AG04450 (cell line): ENCODE measurements at regions of chr19 and their contacts with region 1.

Region 1: DNA sequence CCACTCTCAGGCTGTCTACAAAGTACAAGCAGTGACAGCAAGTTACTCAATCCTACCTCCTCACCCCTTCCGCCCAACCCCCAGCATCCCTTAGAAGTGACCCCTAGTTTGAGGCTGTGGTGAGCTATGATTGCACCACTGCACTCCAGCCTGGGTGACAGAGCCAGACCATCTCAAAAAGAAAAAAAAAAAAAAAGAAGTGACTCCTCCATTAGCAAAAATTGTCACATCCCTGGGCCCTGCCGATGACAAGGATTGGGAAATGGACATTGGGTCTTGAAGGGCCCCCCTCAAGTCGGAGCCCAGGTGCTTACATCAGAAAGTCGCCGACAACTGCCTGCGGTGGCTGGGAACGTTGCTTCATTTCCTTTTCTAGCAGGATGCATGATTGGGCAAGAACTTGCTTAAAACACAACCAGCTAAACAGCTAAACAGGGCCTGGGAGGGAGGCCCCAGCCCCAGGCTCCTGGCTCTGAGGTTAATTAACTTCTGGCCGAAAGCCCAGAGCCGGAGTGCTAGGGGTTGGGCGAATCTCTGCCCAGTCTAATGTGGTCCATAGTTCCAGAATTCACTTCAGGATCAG is 15.3 kb downstream of the RAB3D start:
- DNase-seq: peak; percentile 65
- H3K4me3 ChIP-seq: peak overlapping the region; percentile 38; the same call in 1 of the 2 replicates
- H3K27ac ChIP-seq: peak overlapping the region; percentile 89
- H3K27me3 ChIP-seq: no peaks in the 10 kb centered on the region
- CTCF ChIP-seq: no peak

Region 2: DNA sequence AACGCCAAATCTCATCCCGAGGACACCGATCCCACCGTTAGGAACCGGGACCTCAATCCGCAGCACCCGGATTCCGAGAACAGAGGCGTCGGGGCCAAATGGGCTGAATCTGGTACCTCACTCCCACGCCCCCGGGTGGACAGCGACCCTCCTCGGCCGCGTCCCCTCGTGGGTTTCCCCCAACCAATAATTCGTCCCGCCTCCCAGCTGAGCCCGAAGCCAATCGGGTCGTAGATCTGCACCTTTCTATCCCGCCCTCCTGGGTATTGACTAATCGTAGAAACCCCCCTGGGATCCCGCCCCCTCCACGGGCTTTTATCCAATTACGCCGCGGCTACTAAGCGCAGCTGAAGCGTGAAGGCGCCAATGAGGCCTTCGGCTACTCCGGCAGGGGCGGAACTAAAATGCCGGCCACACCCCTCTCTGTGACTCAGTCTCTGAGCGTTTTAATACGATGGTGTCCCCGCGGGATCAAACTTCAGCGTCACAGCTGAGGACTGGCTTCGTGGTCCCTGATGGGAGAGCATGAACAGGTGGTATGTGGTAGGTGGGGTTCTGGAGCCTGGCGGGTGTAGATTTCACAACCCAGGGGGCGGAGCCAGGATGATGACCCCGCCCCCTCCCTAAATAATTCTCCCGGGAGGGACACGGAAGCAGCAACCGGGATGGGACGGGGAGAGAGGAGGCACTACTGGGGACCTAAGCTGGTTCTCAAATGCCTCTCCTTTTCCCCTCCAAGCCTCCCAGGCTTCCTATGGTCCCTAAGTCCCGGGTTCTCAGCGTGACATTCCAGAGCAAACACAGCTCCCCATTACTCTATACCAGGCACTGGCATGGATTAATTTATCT is 22.1 kb after region 1 on chr19 and contains the starts of genes CCDC159 and TMEM205:
- CTCF ChIA-PET with region 1: no interaction called
- POLR2A ChIA-PET with region 1: interaction called, 11 read pairs
- DNase-seq: peak; percentile 97
- H3K4me3 ChIP-seq: peak within 1 kb of the TSS; percentile 90
- H3K27ac ChIP-seq: peak within 1 kb of the TSS; percentile 71
- H3K27me3 ChIP-seq: no peaks in the 10 kb centered on the region
- CTCF ChIP-seq: 0 out of 2 replicates have a peak, but pooled peaks have one; percentile 8
- polyA plus RNA-seq, gene CCDC159: 12.1 and 14.6 TPM in 2 replicates
- polyA plus RNA-seq, gene TMEM205: 71.9 and 90.6 TPM in 2 replicates

Region 3: GRCh38 chr19:11374433-11375142 is 50.4 kb after region 1 on chr19 and contains the start of gene SWSAP1:
- CTCF ChIA-PET with region 1: no interaction called
- POLR2A ChIA-PET with region 1: interaction called, 12 read pairs
- DNase-seq: peak; percentile 99
- H3K4me3 ChIP-seq: peak within 1 kb of the TSS; percentile 84
- H3K27ac ChIP-seq: peak within 1 kb of the TSS; percentile 91
- H3K27me3 ChIP-seq: no peaks in the 10 kb centered on the region
- CTCF ChIP-seq: no peak
- polyA plus RNA-seq, gene SWSAP1: 0.88 and 0.89 TPM in 2 replicates

Region 4: DNA sequence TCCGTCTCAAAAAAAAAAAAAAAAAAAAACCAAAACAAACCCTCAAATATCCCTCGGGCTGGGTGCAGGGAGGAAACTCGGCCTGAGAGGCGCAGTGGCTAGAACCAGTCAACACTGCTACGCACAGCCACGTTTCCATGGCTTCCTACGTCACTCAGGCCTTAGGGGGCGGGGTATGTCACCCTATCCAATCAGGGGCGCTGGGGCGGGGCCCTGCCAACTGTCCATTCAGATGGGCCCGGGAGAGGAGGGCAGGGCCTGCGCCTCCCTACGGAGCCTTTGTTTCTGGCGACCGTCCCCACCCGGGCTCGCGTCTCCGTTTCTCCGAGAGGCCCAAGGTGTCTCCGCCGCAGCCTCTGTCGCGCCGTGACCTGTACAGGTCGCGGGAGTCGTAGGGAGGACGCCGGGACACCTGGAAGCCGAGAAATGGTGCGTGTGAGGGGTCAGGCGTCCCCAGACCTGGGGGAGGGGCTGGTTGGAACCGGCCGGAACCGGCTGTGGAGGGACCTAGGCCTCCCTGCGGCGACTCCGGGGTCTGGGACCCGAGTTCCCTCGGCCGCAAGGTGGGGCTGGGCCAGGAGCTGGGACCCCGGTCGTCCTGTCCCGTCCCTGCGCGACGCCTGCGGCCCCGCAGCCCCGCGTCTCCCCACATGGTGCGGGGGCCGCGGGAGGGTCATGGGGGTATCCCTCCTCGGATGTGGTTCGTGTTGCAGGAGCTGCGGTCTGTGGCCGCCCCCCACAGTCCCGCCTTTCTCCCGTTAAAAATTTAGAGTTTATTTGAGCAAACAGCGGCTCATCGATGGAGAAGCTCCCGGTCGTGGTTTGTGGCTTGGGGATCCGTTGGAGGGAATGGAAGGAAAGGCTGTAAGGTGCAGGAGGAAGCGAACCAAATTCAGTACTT is 273.3 kb after region 1 on chr19 and contains the start of gene ZNF627:
- CTCF ChIA-PET with region 1: no interaction called
- POLR2A ChIA-PET with region 1: no interaction called
- DNase-seq: peak; percentile 90
- H3K4me3 ChIP-seq: peak within 1 kb of the TSS; percentile 87
- H3K27ac ChIP-seq: peak within 1 kb of the TSS; percentile 88
- H3K27me3 ChIP-seq: no peaks in the 10 kb centered on the region
- CTCF ChIP-seq: 0 out of 2 replicates have a peak, but pooled peaks have one; percentile 11
- polyA plus RNA-seq, gene ZNF627: 15.6 and 20.2 TPM in 2 replicates